Esophagus muscularis mucosa (tissue), 4 donors: ENCODE measurements at regions of chr4 and their contacts with region 1.

Region 1: GRCh38 chr4:52234561-52235440 is 183.7 kb downstream of the SPATA18 start:
- DNase-seq: no peak
- H3K4me3 ChIP-seq: no peak overlapping the region
- H3K27ac ChIP-seq: no peak overlapping the region
- H3K4me1 ChIP-seq: peaks cover 0 to 10% (median 2%) of the 10 kb centered on the region in 4 donors
- H3K27me3 ChIP-seq: no peaks in the 10 kb centered on the region
- CTCF ChIP-seq: peak; percentile 43 to 58 (median 44)
- EP300 ChIP-seq: no peak
- POLR2A ChIP-seq: no peak

Region 2: GRCh38 chr4:52617336-52618020 is 382.7 kb after region 1 on chr4:
- intact Hi-C with region 1: no loop called
- DNase-seq: no peak
- H3K4me3 ChIP-seq: no peak overlapping the region
- H3K27ac ChIP-seq: no peak overlapping the region
- H3K4me1 ChIP-seq: peaks cover 0 to 22% (median 14%) of the 10 kb centered on the region in 4 donors
- H3K27me3 ChIP-seq: no peaks in the 10 kb centered on the region
- CTCF ChIP-seq: no peak
- EP300 ChIP-seq: no peak
- POLR2A ChIP-seq: no peak

Region 3: DNA sequence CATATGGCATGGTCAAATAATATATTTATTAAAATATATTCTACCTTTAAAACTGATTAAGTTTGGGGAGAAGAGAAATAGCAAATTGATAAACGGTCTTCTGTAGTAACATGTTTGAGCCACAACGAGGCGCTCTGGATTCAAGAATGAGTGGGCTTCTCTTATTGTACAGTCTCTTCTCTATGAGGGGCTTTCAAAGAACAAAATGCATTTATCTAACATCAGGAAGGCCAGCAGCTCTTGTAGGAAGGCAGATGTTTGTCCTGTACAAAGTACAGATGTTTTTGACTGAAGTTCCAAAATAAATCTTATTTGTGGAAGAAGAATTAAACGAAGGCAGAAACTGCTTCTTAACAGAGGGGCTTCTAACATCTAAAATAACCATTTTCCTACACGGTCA is 780.9 kb after region 1 on chr4:
- intact Hi-C with region 1: no loop called
- DNase-seq: no peak
- H3K4me3 ChIP-seq: no peak overlapping the region
- H3K27ac ChIP-seq: peak overlapping the region in 1 of 4 donors; percentile 24
- H3K4me1 ChIP-seq: peaks cover 26 to 38% (median 33%) of the 10 kb centered on the region in 4 donors
- H3K27me3 ChIP-seq: no peaks in the 10 kb centered on the region
- CTCF ChIP-seq: peak; percentile 26 to 53 (median 49)
- EP300 ChIP-seq: no peak
- POLR2A ChIP-seq: no peak

Region 4: GRCh38 chr4:54233277-54233696 is 1998.5 kb after region 1 on chr4:
- intact Hi-C with region 1: loop called (anchors 10 kb)
- DNase-seq: no peak
- H3K4me3 ChIP-seq: peak overlapping the region; percentile 54 to 71 (median 58)
- H3K27ac ChIP-seq: peak overlapping the region; percentile 69 to 75 (median 74)
- H3K4me1 ChIP-seq: peaks cover 39 to 59% (median 53%) of the 10 kb centered on the region in 4 donors
- H3K27me3 ChIP-seq: peaks cover 11 to 90% (median 49%) of the 10 kb centered on the region in 4 donors
- CTCF ChIP-seq: peak; percentile 72 to 78 (median 77)
- EP300 ChIP-seq: no peak
- POLR2A ChIP-seq: no peak